ENCODE measurements at regions of chr1 and their contacts with region 1.

Region 1: GRCh38 chr1:79042117-79042516 is 35.6 kb upstream of the ADGRL4 start:
- DNase-seq: no peak
- H3K4me3 Mint-ChIP-seq: no peak overlapping the region
- H3K27ac Mint-ChIP-seq: no peak overlapping the region
- H3K4me1 Mint-ChIP-seq: peaks cover 3% of the 10 kb centered on the region
- H3K27me3 Mint-ChIP-seq: no peaks in the 10 kb centered on the region

Region 2: DNA sequence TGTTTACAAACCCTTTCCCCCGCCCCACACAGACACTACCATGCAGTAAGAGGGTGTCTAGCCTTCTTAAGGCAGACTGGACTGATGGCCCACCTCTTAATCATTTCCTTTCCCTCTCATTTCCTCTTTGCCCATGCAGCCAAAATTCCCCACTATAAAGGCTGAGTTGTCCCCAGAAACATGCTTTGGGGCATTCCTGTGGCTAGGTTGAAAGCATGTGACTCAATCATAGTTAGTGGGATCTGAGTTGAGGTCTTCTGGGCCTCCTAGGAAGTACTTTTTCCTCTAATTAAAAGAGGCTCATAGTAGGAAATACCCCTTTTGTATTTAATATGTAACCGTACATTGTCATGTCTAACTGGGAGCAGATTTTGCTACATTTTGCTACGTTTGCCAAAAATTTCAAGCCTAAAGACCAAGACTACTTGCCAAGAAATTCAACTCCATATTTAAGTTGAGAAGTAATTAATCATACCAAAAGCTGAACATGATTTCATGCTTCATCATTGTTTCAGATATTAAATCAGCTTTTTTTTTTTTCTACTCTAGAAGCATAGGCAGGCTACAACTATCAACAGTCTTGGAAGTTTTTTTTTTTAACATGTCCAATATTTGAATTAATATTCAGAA is 210.3 kb before region 1 on chr1:
- CTCF ChIA-PET with region 1: no interaction called
- POLR2A ChIA-PET with region 1: no interaction called
- intact Hi-C with region 1: loop called (anchors 5 kb)
- DNase-seq: no peak
- H3K4me3 Mint-ChIP-seq: no peak overlapping the region
- H3K27ac Mint-ChIP-seq: no peak overlapping the region
- H3K4me1 Mint-ChIP-seq: peaks cover 8% of the 10 kb centered on the region
- H3K27me3 Mint-ChIP-seq: no peaks in the 10 kb centered on the region

Region 3: GRCh38 chr1:79052829-79053449 is 10.8 kb after region 1 on chr1:
- CTCF ChIA-PET with region 1: no interaction called
- POLR2A ChIA-PET with region 1: no interaction called
- intact Hi-C with region 1: loop called (anchors 1 kb)
- DNase-seq: no peak
- H3K4me3 Mint-ChIP-seq: no peak overlapping the region
- H3K27ac Mint-ChIP-seq: no peak overlapping the region
- H3K4me1 Mint-ChIP-seq: peaks cover 3% of the 10 kb centered on the region
- H3K27me3 Mint-ChIP-seq: no peaks in the 10 kb centered on the region